ENCODE measurements at regions of chr16 and their contacts with region 1.

Region 1: GRCh38 chr16:78292903-78293347 is 193.5 kb downstream of the WWOX start:
- DNase-seq: peak; percentile 54
- H3K4me3 Mint-ChIP-seq: peak overlapping the region; percentile 46
- H3K27ac Mint-ChIP-seq: peak overlapping the region; percentile 71
- H3K4me1 Mint-ChIP-seq: peaks cover 27% of the 10 kb centered on the region
- H3K27me3 Mint-ChIP-seq: no peaks in the 10 kb centered on the region
- CTCF ChIP-seq: no peak

Region 2: DNA sequence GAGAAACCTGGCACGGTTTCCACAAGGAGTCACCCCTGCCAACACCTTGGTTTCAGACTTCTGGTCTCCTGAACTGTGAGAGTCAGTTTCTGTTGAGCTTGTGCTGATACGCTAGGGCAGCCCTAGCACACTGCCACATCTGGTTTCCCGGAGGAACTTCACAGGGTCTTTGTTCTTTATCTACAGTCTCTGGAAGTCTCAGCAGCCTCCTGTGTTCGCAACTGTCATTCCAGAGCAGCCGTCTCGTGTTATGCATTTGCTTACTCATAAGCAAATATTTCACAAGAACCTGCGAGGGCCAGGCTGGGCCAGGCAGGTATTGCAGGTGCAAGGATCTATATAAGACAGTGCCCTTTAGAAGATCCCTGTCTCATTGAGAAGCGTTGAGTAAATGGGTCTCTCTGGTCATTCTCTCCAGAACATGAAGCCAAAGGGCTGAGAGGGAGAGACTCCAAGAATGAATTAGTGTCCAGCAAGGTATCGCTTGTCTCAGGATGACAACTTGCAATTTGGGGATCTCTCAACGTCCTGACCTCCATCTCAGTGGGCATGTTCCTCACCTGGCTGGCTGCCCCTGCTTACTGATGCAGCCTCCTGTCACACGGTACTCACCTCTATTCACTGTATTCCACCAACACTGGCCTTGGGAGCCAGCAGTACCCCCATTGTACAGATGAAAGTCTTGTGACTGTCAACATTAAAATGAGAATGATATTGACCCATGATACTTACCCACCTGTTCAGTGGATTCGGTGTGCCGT is 52.3 kb before region 1 on chr16:
- CTCF ChIA-PET with region 1: no interaction called
- intact Hi-C with region 1: loop called (anchors 1 kb)
- DNase-seq: peak; percentile 75
- H3K4me3 Mint-ChIP-seq: peak overlapping the region; percentile 1
- H3K27ac Mint-ChIP-seq: peak overlapping the region; percentile 16
- H3K4me1 Mint-ChIP-seq: peaks cover 57% of the 10 kb centered on the region
- H3K27me3 Mint-ChIP-seq: no peaks in the 10 kb centered on the region
- CTCF ChIP-seq: no peak